IMR-90 (cell line): ENCODE measurements at regions of chr5 and their contacts with region 1.

Region 1: DNA sequence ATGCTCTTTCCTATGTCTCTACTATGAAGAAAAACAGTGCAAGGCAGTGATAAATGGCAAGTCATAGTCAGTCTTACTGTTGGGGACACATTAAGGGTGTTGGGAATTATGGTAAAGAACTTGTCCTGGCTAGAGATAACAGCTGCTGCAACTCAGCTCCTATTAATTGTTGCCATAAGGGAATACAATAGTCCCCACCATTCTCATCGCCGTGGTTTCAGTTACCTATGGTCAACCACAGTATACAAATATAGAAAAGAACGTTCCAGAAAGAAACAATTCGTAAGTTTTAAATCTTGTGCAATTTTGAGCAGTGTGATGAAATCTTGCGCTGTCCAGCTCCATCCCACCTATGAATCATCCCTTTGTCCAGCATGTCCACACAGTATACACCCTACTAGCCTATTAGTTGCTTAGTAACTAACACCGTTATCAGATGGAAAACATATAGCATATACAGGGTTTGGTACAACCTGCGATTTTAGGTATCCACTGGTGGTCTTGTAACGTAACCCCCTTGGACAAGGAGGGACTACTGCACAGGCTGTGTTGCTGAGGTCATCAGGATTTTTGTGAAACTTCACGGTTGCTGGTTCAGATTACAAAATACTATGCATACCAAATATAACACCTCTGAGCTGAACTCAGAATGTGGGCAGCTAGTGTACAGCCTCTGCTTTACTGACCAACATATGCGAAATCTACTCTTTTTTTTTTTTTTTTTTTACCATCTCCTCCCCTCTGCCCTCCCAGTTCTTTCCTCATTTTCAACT is 53.5 kb downstream of the ZFR start:
- DNase-seq: peak; percentile 95
- ATAC-seq: peak; percentile 91
- H3K4me3 ChIP-seq: no peak overlapping the region
- H3K27ac ChIP-seq: peak overlapping the region; percentile 19; the same call in 1 of the 2 replicates
- H3K4me1 ChIP-seq: peaks cover 10% of the 10 kb centered on the region
- H3K27me3 ChIP-seq: no peaks in the 10 kb centered on the region
- CTCF ChIP-seq: no peak
- POLR2A ChIP-seq: no peak
- RAD21 ChIP-seq: no peak

Region 2: DNA sequence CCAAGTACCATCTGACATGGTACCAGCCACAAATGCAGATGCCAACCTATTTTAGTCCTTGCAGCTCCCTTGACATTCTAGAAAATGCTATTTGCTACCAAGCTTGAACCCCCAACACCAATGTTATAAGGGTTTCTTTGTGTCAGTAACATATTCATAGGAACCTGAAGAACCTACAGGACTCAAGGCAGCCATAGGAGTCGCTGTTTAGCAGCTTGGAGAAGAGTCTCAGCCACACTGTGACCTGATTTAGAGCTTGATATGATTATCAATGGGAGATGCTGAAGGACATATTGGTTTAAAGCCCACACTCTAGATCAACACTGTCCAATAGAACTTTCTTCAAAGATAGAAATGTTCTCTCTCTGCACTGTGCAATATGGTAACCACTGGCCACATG is 59.9 kb after region 1 on chr5:
- CTCF ChIA-PET with region 1: no interaction called
- POLR2A ChIA-PET with region 1: no interaction called
- dilution Hi-C with region 1: no loop called
- in situ Hi-C with region 1: no loop called
- intact Hi-C with region 1: no loop called
- DNase-seq: no peak
- ATAC-seq: no peak
- H3K4me3 ChIP-seq: no peak overlapping the region
- H3K27ac ChIP-seq: no peak overlapping the region
- H3K4me1 ChIP-seq: no peaks in the 10 kb centered on the region
- H3K27me3 ChIP-seq: peaks cover 23% of the 10 kb centered on the region
- CTCF ChIP-seq: 0 out of 2 replicates have a peak, but pooled peaks have one; percentile 9
- POLR2A ChIP-seq: no peak
- RAD21 ChIP-seq: no peak

Region 3: DNA sequence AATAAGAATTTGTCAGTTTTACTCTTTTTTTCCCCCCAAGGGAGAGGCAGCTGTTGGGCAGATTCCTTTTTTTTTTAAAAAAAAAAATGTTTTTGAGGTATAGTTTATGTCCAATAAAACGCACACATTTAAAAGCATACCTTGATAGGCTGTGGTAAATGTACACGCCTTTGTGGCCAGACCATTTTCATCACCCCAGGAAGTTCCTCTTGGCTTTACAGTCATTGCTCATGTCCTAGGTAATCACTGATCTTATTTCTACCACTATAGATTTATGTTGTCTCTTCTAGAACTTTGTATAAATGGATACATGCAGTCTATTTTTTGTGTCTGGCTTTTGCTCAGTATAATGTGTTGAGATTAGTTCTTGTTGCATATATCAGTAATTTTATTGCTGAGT is 204.1 kb after region 1 on chr5:
- CTCF ChIA-PET with region 1: interaction called, 4 read pairs
- POLR2A ChIA-PET with region 1: no interaction called
- dilution Hi-C with region 1: no loop called
- in situ Hi-C with region 1: no loop called
- intact Hi-C with region 1: loop called (anchors 5 kb)
- DNase-seq: no peak
- ATAC-seq: no peak
- H3K4me3 ChIP-seq: no peak overlapping the region
- H3K27ac ChIP-seq: no peak overlapping the region
- H3K4me1 ChIP-seq: peaks cover 1% of the 10 kb centered on the region; the same call in 1 of the 2 replicates
- H3K27me3 ChIP-seq: no peaks in the 10 kb centered on the region
- CTCF ChIP-seq: no peak
- POLR2A ChIP-seq: no peak
- RAD21 ChIP-seq: no peak